Heart left ventricle (tissue), 16 donors: ENCODE measurements at regions of chr1 and their contacts with region 1.

Region 1: GRCh38 chr1:45303582-45304310 is 22.9 kb upstream of the HPDL start:
- DNase-seq: peak; percentile 98 to 99 (median 99)
- ATAC-seq: peak; percentile 98
- H3K4me3 ChIP-seq: peak overlapping the region; percentile 57 to 89 (median 71)
- H3K27ac ChIP-seq: peak overlapping the region; percentile 76 to 98 (median 92)
- H3K4me1 ChIP-seq: peaks cover 0 to 17% (median 14%) of the 10 kb centered on the region in 12 donors
- H3K27me3 ChIP-seq: no peaks in the 10 kb centered on the region
- CTCF ChIP-seq: peak; percentile 48 to 80 (median 66)
- POLR2A ChIP-seq: peak in 1 of 2 donors; percentile 49

Region 2: DNA sequence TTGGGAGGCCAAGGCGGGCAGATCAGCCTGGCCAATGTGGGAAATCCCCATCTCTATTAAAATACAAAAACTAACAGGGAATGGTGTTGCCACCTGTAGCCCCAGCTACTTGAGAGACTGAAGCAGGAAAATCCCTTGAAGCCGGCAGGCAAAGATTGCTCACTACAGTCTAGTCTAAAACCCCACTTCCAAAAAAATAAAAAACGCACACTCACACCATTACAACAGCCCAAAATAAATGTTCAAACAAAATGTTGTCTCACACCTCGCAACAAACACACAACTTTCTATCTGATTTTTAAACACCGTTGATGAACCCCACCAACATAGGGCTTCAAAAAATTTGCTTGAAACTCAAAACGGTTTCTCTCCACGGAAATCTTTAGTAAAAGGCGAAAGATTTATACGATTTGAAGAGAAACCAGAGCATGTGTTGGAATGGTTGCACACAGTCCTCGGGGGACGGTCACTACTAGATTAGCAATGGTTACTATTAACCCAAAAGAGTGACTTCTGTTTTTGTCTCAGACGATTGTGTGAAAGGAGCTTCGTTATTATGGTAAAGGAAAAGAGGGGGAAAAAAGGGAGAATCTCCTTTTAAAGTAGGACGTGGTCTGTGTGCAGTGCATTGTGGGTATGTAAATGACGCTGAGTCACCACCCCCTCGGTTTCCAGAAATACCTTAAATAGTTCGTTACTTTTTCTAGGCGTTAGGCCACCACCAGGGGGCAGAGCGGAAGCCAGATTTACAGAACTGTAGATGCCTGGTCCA is 572.8 kb before region 1 on chr1 and contains the start of gene RNU5D-1:
- intact Hi-C with region 1: loop called in 2 of 10 experiments (anchors 2 to 5 kb)
- DNase-seq: peak; percentile 90 to 94 (median 93)
- ATAC-seq: peak; percentile 84 to 91 (median 87)
- H3K4me3 ChIP-seq: peak within 1 kb of the TSS in 9 of 12 donors; percentile 17 to 48 (median 32)
- H3K27ac ChIP-seq: peak within 1 kb of the TSS; percentile 70 to 96 (median 84)
- H3K4me1 ChIP-seq: peaks cover 0 to 30% (median 9%) of the 10 kb centered on the region in 12 donors
- H3K27me3 ChIP-seq: no peaks in the 10 kb centered on the region
- CTCF ChIP-seq: peak; percentile 74 to 91 (median 82)
- POLR2A ChIP-seq: peak in 1 of 2 donors; percentile 58
- total RNA-seq, gene RNU5D-1: not detected

Region 3: GRCh38 chr1:44786138-44786840 is 517.5 kb before region 1 on chr1:
- intact Hi-C with region 1: loop called in 4 of 10 experiments (anchors 5 to 10 kb)
- DNase-seq: peak; percentile 64 to 87 (median 68)
- ATAC-seq: peak; percentile 56 to 77 (median 71)
- H3K4me3 ChIP-seq: peak overlapping the region; percentile 2 to 63 (median 52)
- H3K27ac ChIP-seq: peak overlapping the region in 11 of 12 donors; percentile 11 to 68 (median 53)
- H3K4me1 ChIP-seq: peaks cover 0 to 33% (median 25%) of the 10 kb centered on the region in 12 donors
- H3K27me3 ChIP-seq: no peaks in the 10 kb centered on the region
- CTCF ChIP-seq: peak; percentile 93 to 99 (median 98)
- POLR2A ChIP-seq: no peak

Region 4: GRCh38 chr1:44835738-44836675 is 467.7 kb before region 1 on chr1:
- intact Hi-C with region 1: loop called in 6 of 10 experiments (anchors 1 to 5 kb)
- DNase-seq: peak; percentile 82 to 89 (median 86)
- ATAC-seq: peak; percentile 65 to 89 (median 87)
- H3K4me3 ChIP-seq: no peak overlapping the region
- H3K27ac ChIP-seq: no peak overlapping the region
- H3K4me1 ChIP-seq: peaks cover 0 to 14% (median 3%) of the 10 kb centered on the region in 12 donors
- H3K27me3 ChIP-seq: no peaks in the 10 kb centered on the region
- CTCF ChIP-seq: peak; percentile 78 to 93 (median 86)
- POLR2A ChIP-seq: no peak

Region 5: GRCh38 chr1:45033356-45033755 is 270.4 kb before region 1 on chr1:
- intact Hi-C with region 1: no loop called
- DNase-seq: no peak
- ATAC-seq: no peak
- H3K4me3 ChIP-seq: no peak overlapping the region
- H3K27ac ChIP-seq: no peak overlapping the region
- H3K4me1 ChIP-seq: no peaks in the 10 kb centered on the region
- H3K27me3 ChIP-seq: no peaks in the 10 kb centered on the region
- CTCF ChIP-seq: no peak
- POLR2A ChIP-seq: no peak

Region 6: DNA sequence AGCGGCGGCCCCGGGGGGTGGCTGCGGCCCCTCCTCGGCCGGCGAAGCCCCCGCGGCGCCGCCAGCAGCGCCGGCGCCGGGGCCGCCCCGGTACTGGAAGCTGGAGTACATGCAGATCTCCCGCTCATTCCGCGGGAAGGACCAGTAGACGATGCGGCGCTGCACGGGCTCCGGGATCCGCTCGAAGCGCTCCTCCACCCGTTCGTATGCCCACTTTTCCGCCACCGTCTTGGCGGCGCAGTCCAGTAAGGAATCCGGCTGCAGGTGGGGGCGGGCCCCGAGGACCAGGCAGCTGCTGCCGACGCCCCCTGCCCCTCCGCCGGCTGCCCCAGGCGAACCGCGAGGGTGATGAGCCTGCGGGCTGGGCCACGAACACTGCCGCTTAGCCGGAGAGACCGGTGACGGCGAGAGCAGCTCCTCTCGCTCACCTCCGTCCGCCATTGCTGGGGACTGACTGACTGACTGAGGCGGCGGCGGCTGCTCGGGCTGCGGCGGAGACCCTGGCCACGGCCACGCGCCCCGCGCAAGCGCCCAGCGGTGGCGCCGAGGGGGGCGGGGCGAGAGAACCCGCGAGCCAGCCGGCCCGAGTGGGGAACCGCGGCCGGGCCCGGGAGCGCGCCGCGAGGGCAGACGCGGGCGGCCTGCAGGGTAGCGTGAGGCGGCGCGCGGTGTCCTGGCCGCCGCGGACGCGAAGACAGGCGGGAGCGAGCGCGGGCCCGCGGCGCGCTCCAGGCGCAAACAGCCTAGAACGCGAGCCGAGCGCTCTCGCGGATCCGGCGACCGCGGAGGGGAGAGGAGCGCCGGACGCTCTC is 97.6 kb before region 1 on chr1 and contains the start of gene ZSWIM5:
- intact Hi-C with region 1: loop called in 1 of 10 experiments (anchors 5 kb)
- DNase-seq: peak; percentile 52 to 83 (median 63)
- ATAC-seq: peak; percentile 88 to 97 (median 92)
- H3K4me3 ChIP-seq: peak within 1 kb of the TSS; percentile 71 to 95 (median 84)
- H3K27ac ChIP-seq: peak within 1 kb of the TSS; percentile 16 to 90 (median 83)
- H3K4me1 ChIP-seq: peaks cover 0 to 28% (median 8%) of the 10 kb centered on the region in 12 donors
- H3K27me3 ChIP-seq: peaks cover 0 to 29% (median 0%) of the 10 kb centered on the region in 9 donors
- CTCF ChIP-seq: no peak
- POLR2A ChIP-seq: peak in 1 of 2 donors; percentile 22
- total RNA-seq, gene ZSWIM5: 0.39 to 1.7 (median 0.99) TPM

Region 7: DNA sequence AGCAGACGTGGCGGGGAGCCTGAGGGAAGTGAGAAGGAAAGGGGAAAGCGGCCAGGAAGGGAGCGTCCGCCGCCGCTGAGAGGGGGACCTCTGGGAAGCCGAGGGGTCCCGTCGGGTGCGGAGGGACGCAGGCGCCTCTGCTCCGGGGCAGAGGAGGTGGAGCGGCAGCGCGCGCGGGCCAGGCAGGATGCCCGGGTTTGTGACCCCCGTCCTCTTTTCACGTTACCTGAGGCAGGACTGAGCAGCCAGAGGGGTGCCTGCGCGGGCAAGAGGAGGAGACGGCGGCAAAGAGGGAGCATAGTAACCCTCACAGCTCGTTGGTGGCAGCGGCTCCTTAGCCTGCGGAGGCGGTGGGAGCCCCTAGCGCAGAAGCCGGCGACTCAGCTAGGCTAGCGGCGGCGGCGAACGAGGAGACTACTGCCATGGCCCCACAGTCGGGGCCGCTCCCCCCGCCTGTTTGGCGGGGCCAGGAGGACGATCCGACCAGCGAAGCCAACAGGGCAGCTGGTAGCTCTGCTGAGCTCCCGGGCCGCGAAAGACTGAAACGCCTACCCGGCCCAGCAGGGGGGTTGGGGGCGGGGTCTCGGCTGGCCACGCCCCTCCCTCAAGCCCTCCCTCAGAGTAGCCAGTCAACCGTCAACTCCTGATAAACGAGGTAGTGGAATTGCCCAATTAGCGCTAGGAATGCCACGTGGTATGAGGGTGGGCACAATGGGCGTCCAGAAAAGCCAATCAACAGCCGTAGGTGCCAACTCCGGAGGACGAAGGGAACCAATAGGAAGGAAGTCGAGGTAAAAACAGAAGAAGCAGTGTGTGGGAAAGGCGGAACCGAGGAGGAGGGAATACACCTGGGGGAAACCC is 187.1 kb after region 1 on chr1 and contains the start of gene TESK2:
- intact Hi-C with region 1: loop called in 4 of 10 experiments (anchors 1 to 5 kb)
- DNase-seq: peak; percentile 96 to 97 (median 97)
- ATAC-seq: peak; percentile 98 to 99 (median 99)
- H3K4me3 ChIP-seq: peak within 1 kb of the TSS; percentile 60 to 99 (median 79)
- H3K27ac ChIP-seq: peak within 1 kb of the TSS in 11 of 12 donors; percentile 34 to 87 (median 69)
- H3K4me1 ChIP-seq: peaks cover 0 to 22% (median 11%) of the 10 kb centered on the region in 12 donors
- H3K27me3 ChIP-seq: no peaks in the 10 kb centered on the region
- CTCF ChIP-seq: peak in 4 of 12 donors; percentile 8 to 20 (median 14)
- POLR2A ChIP-seq: peak in 1 of 2 donors; percentile 87
- total RNA-seq, gene TESK2: 0.74 to 4.7 (median 1.5) TPM